GM23248 (cell line): ENCODE measurements at regions of chr6 and their contacts with region 1.

Region 1: GRCh38 chr6:82363351-82364086 is at the start of gene TPBG:
- DNase-seq: peak; percentile 87
- H3K4me3 ChIP-seq: peak within 1 kb of the TSS; percentile 99
- H3K27ac ChIP-seq: peak within 1 kb of the TSS; percentile 92
- H3K4me1 ChIP-seq: peaks cover 49% of the 10 kb centered on the region
- H3K27me3 ChIP-seq: no peaks in the 10 kb centered on the region
- total RNA-seq, gene TPBG: 153 and 174 TPM in 2 replicates

Region 2: DNA sequence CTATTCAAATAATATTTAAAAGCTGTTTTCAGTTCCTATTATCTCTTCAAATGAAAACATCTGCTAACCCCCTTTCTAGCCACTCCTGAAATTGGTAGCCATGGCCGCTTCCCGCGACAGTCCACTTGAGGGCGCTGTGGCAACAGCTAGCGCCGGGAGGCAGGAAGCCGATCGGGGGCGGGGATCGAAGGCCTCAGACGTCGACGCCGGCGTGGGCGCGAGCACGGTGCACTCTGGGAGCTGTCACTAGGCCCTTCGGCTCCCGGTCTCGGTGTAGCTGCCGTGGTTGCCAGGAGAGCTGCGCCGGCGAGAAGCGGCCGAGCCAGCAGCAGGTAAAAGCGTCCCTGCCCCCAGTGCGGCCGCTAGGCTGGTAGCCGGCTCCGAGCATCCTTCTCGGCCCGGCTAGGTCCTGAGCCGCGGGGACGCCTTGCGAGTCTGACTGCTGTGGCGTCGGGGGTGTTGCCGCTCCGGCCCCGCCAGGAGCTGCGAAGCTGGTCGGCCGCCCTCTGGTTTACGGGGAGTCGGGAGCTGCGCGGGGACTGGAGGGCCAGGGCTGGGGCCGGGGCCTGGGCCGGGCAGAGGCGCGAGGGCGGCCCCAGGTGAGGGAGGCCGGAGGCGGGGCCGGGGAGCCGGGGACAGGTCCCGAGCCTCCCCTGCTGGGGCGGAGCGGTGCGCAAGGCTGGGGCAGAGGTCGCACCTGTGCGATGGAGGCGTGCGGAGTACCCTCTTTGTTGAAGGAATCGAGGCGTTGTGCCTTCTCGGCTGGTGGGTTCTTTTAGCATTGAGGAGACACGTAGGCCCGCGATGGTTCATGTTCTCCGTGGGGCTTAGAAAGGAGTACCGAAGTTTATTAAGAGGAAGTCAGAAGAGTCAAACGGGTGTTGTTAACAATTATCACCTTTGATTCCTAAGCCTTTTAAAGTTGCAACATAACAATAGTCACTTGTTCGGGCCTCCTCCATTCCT is 704.2 kb after region 1 on chr6 and contains the start of gene DOP1A:
- in situ Hi-C with region 1: loop called (anchors 25 kb)
- DNase-seq: peak; percentile 99
- H3K4me3 ChIP-seq: peak within 1 kb of the TSS; percentile 89
- H3K27ac ChIP-seq: peak within 1 kb of the TSS; percentile 23; the same call in 1 of the 2 replicates
- H3K4me1 ChIP-seq: peaks cover 15% of the 10 kb centered on the region
- H3K27me3 ChIP-seq: no peaks in the 10 kb centered on the region
- total RNA-seq, gene DOP1A: 9.4 and 18.2 TPM in 2 replicates